MCF 10A (cell line): ENCODE measurements at regions of chr4 and their contacts with region 1.

Region 1: GRCh38 chr4:107757864-107758476 is 37.9 kb upstream of the PAPSS1 start:
- DNase-seq: peak; percentile 36
- H3K4me3 Mint-ChIP-seq: no peak overlapping the region
- H3K27ac Mint-ChIP-seq: no peak overlapping the region
- H3K4me1 Mint-ChIP-seq: no peaks in the 10 kb centered on the region
- H3K27me3 Mint-ChIP-seq: no peaks in the 10 kb centered on the region
- CTCF ChIP-seq: peak; percentile 41

Region 2: DNA sequence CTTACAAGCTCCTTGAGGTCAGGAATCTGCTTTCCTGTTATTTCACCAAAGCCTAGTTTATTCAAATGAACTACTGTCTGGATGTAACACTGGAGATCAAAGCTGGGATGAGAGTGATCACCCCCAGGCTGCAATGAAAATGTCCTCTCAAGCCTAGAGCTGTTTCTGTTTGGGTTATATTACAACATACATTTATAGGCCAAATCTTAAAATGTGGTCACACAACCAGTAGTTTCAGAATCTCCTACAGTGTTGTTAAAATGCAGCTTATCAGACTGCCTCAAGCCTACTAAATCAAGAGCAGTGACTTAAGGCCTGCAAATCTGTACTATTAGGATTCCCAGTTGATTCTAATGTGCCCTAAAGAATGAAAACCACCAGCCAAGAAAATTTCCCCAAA is 245.4 kb before region 1 on chr4:
- CTCF ChIA-PET with region 1: no interaction called
- POLR2A ChIA-PET with region 1: no interaction called
- intact Hi-C with region 1: no loop called
- DNase-seq: no peak
- H3K4me3 Mint-ChIP-seq: no peak overlapping the region
- H3K27ac Mint-ChIP-seq: no peak overlapping the region
- H3K4me1 Mint-ChIP-seq: peaks cover 5% of the 10 kb centered on the region
- H3K27me3 Mint-ChIP-seq: no peaks in the 10 kb centered on the region
- CTCF ChIP-seq: no peak

Region 3: DNA sequence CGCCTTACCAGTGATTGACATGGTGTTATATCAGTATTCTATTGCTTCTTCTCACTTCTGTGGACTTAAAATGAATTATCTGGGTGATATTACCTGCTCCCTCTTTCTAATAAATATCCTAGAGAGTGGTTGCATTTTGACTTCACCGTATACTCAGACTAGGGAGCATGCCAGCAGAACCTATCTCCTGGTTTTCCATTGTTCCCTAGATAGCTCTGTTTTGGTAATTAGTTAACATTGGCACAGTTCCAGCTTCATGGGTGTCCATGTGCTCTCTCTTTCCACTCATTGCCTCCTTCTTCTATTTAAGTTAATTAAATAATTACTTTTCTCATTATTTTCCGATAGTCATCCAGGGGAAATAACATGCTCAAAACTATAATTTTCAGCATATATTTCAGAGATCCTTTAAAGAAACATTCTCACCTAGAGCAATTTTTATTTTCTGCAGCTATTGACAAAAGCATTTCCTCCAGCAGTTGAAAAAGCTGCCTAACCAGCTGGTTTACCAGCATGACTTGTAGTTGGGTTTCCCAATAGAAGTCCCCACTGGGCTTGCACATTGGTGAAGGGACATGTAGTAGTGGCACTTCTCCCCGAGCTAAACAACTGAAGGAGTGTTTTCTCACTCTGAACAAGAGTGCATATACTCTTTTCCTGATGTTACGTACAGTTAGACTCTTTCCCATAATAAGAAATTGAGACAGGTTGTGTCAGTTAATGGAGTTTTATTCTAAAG is 10.1 kb before region 1 on chr4:
- CTCF ChIA-PET with region 1: interaction called, 11 read pairs
- POLR2A ChIA-PET with region 1: no interaction called
- intact Hi-C with region 1: no loop called
- DNase-seq: no peak
- H3K4me3 Mint-ChIP-seq: no peak overlapping the region
- H3K27ac Mint-ChIP-seq: no peak overlapping the region
- H3K4me1 Mint-ChIP-seq: no peaks in the 10 kb centered on the region
- H3K27me3 Mint-ChIP-seq: peaks cover 34% of the 10 kb centered on the region
- CTCF ChIP-seq: no peak

Region 4: GRCh38 chr4:107863850-107864371 is 105.9 kb after region 1 on chr4:
- CTCF ChIA-PET with region 1: interaction called, 4 read pairs
- POLR2A ChIA-PET with region 1: no interaction called
- intact Hi-C with region 1: loop called (anchors 1 kb)
- DNase-seq: peak; percentile 84
- H3K4me3 Mint-ChIP-seq: no peak overlapping the region
- H3K27ac Mint-ChIP-seq: peak overlapping the region; percentile 98
- H3K4me1 Mint-ChIP-seq: peaks cover 26% of the 10 kb centered on the region
- H3K27me3 Mint-ChIP-seq: no peaks in the 10 kb centered on the region
- CTCF ChIP-seq: no peak

Region 5: DNA sequence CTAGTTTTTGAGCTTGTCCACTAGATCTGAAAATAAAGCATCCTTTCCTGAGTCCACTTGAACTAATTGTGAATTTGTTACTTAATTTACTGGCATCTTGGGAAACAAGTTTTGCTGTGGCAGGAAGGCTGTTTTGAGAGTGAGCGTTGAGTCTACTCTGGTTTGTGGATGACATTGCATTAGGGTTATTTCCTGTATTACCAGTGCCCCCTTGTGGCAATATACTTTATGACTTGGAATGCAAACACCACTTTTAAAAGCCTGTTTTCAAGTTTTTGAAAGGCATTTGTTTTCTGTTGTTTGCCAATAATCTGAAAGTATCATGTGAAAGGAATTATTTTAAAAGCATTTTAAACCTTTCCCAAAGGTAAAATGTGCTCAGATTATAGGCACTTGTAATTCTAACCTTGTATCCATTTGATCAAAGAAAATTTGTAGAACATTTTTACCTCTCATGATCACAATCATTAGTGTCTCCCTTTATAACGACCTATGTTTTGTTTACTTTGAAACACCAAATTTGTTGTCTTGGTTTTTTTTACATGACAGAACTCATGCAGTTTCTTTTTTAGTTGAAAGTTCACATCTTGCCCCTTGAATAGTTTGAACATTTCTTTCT is 155.4 kb after region 1 on chr4:
- CTCF ChIA-PET with region 1: interaction called, 122 read pairs
- POLR2A ChIA-PET with region 1: interaction called, 7 read pairs
- intact Hi-C with region 1: loop called (anchors 1 kb)
- DNase-seq: peak; percentile 79
- H3K4me3 Mint-ChIP-seq: no peak overlapping the region
- H3K27ac Mint-ChIP-seq: no peak overlapping the region
- H3K4me1 Mint-ChIP-seq: no peaks in the 10 kb centered on the region
- H3K27me3 Mint-ChIP-seq: no peaks in the 10 kb centered on the region
- CTCF ChIP-seq: peak; percentile 50

Region 6: DNA sequence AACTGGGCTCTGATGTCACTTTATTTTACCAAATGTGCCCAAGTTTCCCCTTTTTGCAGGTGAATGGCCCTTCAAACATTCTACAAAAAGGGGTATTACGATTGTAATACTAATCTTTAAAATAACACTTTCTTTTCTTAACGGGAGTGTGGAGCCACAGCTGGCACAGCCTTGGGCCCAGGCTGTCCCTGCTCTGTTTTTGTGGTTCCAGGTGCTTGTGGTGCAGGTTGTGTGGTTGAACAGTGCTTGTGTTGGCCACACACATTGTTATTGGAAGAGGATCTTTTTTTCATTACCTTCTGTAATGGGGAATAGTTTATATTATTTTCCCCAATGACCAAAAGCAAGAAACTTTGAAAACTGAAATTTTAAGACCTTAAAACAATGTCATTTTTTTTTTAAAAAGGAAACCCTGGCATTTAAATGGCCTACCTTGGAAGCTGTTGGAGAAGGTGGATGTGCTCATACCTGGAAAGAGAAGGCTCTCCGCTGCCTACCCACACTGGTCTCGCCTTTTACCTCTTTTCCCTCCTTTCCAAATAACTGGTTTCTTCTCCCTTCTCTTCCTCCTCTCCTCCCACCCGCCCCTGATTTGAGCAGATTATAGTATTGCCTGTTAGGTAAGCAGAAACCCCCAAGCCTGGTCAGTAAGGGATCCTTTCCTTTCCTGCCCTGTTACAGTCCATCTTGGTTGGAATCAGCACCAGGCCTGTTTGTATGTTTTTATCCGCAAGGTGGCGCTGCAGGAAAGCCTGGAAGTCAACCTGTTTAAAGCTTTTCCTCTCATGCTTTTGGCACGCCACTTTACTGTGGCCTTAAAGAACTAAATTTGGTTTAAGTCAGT is 260.3 kb after region 1 on chr4:
- CTCF ChIA-PET with region 1: interaction called, 3 read pairs
- POLR2A ChIA-PET with region 1: no interaction called
- intact Hi-C with region 1: loop called (anchors 5 kb)
- DNase-seq: peak; percentile 82
- H3K4me3 Mint-ChIP-seq: no peak overlapping the region
- H3K27ac Mint-ChIP-seq: peak overlapping the region; percentile 39
- H3K4me1 Mint-ChIP-seq: no peaks in the 10 kb centered on the region
- H3K27me3 Mint-ChIP-seq: no peaks in the 10 kb centered on the region
- CTCF ChIP-seq: peak; percentile 72